Colonic mucosa (tissue), 4 donors: ENCODE measurements at regions of chr3 and their contacts with region 1.

Region 1: DNA sequence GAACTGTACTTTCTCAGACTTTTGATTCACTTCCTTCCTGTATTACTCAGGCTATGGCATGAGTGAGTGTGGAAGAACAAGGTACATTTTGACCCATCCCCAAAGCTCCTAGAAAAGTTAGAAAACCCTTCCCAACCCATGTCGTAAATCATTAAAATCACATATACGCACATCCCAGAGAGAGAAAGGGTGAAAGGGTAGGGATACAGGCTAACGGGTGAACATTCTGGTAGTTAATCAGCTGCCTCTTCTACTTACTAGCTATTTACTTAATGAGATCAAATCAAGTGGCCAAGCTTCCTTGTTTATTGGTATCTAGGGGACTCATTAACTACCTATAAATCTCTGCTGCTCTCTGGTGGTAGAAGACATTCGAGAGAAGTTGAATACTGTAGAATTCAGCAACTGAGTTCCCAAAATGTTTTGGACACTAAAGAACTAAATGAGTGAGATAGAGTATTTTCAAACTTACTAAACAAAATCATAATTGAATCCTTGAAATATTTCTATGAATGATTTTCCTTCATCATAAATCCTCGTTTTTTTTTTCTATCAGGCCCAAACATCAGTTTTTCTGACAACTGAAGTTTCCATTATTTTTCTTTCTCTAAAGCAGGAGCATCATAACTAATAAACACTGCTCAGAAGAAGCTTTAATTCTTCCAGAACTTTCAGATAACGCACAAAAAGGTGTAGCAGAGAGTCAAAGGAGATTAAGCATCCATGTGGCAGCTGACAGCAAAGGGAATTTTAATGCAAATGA is 124.2 kb downstream of the IMPG2 start:
- DNase-seq: no peak
- H3K4me3 ChIP-seq: no peak overlapping the region
- H3K27ac ChIP-seq: no peak overlapping the region
- H3K4me1 ChIP-seq: no peaks in the 10 kb centered on the region
- H3K27me3 ChIP-seq: no peaks in the 10 kb centered on the region
- CTCF ChIP-seq: peak; percentile 45

Region 2: DNA sequence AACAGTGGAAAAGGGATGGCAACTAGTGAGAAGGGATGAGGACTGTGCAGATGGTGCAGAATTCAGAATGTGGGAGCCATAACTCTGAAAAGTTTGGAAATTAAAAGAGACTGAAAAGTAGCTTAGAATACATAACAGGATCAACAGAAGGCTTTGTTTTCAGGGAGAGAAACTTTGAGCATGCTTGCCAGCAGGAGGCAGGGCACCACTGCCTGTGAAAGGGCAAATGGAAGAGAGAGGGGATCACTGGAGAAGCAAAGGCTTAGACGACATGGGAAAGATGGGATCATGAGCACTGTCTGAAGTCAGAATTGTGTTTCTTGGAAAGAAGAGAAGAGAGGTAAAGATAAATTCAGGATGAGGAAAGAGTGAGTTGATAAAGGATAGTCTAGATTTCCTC is 302.5 kb before region 1 on chr3:
- intact Hi-C with region 1: loop called (anchors 5 kb)
- DNase-seq: no peak
- H3K4me3 ChIP-seq: no peak overlapping the region
- H3K27ac ChIP-seq: no peak overlapping the region
- H3K4me1 ChIP-seq: no peaks in the 10 kb centered on the region
- H3K27me3 ChIP-seq: no peaks in the 10 kb centered on the region
- CTCF ChIP-seq: no peak

Region 3: DNA sequence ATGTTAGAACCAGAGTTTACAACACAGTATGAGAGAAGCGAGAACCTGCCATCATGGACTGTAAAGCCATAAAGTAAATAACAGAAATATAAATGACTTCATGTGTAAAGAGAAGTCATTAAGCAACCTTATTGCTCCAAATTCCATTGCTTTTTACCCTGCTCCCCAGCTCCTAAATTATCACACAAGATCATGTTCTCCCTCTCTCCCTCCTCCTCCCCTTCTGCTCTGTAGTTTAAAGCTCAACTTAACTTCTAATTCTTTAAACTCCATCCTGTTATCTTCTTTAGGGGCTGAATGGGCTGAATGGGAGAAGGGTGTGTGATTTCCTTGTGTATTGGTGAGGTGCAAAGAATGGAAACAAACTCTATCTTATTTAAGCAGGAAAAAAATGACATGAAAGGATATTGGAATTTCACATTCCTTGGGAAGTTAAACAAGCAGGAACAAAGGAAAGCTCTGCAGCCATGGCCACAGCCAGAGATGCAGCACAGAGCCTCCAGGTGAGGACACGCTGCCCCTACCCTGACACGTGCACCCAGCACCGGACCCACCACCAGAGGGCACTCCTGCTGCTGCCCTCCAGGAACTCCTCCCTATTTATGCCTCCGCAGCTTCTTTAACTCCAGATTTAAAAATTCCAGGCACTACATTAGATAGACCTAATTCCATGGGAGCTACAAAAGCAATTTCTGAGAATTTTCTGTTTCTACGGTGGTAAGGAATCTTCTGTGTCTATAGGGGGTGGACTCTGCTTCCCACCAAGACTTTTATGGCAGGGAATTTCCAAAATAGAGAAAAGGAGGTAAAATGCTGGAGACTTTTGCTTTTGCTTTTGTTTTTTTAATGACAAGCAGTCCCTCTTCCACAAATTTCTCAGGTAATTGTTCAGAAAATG is 126.0 kb before region 1 on chr3:
- intact Hi-C with region 1: loop called (anchors 10 kb)
- DNase-seq: peak; percentile 82
- H3K4me3 ChIP-seq: no peak overlapping the region
- H3K27ac ChIP-seq: peak overlapping the region; percentile 52
- H3K4me1 ChIP-seq: no peaks in the 10 kb centered on the region
- H3K27me3 ChIP-seq: no peaks in the 10 kb centered on the region
- CTCF ChIP-seq: peak; percentile 84